ENCODE measurements at regions of chr4 and their contacts with region 1.

Region 1: DNA sequence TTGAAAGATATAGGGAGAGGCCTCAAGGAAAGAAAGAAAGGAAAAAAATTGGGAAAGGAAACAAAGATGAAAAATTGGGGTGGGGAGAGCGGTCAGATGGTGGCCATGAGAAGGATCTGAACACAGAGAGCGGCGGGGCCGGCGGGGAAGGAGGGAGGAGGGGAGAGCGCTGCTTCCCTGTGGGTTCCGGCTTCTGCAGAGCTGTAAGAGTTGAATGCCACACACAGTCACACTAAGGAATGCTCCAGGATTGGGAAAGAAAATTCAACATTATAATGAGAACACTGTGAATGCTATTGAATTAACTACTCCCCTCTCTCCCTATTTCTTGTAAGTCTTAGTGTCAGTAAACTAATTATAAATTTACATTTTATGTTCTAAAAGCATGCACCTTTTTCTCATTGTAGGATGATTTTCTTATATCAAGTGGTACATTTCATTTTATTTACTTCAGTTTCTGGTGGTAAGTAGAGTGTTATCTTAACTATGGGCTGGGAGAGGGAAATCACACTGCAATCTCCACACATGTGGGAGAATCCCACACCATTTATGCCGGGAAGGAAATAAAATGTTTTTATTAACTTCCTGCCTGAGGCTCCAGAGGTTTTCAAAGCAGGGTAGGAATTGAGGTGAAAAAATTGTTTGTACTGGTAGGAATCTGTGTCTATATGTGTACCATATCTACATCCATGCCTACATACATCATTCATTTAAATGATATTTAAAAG is 904 bp downstream of the F11 start:
- DNase-seq: peak; percentile 42
- H3K4me3 Mint-ChIP-seq: peak overlapping the region; percentile 60
- H3K27ac Mint-ChIP-seq: peak overlapping the region; percentile 82
- H3K4me1 Mint-ChIP-seq: peaks cover 11% of the 10 kb centered on the region
- H3K27me3 Mint-ChIP-seq: no peaks in the 10 kb centered on the region
- CTCF ChIP-seq: no peak

Region 2: DNA sequence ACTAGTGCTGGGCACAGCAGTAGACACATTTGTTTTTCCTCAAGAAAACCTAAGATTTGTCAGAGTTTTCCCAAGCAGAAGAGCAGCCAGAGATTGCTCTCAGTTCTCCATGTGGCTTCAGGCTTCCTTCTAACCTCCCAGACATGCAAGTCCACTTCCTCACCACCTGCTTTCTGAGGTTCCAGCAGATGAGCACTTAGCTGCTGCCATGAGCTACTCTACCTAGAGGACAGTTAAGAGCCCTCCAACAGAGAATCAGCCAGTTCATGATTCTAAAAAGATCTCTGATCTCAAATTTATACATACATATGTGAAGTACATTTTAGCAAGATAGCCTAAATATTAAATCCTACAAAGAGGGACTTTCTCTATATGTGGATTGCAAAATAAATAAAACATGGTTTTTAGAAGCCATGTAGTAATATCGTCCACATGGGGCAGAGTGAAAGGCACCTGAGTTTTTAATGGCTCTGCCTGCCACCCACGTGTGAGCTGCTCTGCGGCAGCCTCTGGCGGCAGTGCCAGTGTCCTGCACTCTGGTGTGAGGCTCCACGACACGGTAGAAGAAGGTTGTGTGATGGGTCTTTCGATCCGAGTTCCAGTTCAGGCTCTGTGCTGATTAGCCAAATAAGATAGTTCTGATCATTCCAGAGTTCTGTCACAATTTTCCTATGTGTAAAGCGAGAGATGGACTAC is 65.2 kb before region 1 on chr4:
- CTCF ChIA-PET with region 1: no interaction called
- intact Hi-C with region 1: loop called (anchors 10 kb)
- DNase-seq: peak; percentile 68
- H3K4me3 Mint-ChIP-seq: no peak overlapping the region
- H3K27ac Mint-ChIP-seq: no peak overlapping the region
- H3K4me1 Mint-ChIP-seq: peaks cover 7% of the 10 kb centered on the region
- H3K27me3 Mint-ChIP-seq: no peaks in the 10 kb centered on the region
- CTCF ChIP-seq: peak; percentile 73